ENCODE measurements at regions of chr5 and their contacts with region 1.

Region 1: GRCh38 chr5:35777358-35778087 is 79.2 kb upstream of the IL7R start:
- DNase-seq: peak; percentile 35 to 76 (median 67)
- ATAC-seq: peak; percentile 83
- H3K4me3 ChIP-seq: peak overlapping the region; percentile 14
- H3K4me3 Mint-ChIP-seq: peak overlapping the region; percentile 6 to 85 (median 74)
- H3K27ac ChIP-seq: peak overlapping the region; percentile 52
- H3K27ac Mint-ChIP-seq: peak overlapping the region; percentile 76 to 99 (median 92)
- H3K4me1 ChIP-seq: peaks cover 39 to 50% of the 10 kb centered on the region in 2 donors
- H3K4me1 Mint-ChIP-seq: peaks cover 19 to 87% (median 62%) of the 10 kb centered on the region in 7 donors
- H3K27me3 ChIP-seq: no peaks in the 10 kb centered on the region
- H3K27me3 Mint-ChIP-seq: no peaks in the 10 kb centered on the region

Region 2: GRCh38 chr5:35089334-35090314 is 687.9 kb before region 1 on chr5:
- CTCF ChIA-PET with region 1: no interaction called
- POLR2A ChIA-PET with region 1: no interaction called
- intact Hi-C with region 1: loop called in 1 of 2 experiments (anchors 5 kb)
- DNase-seq: peak; percentile 15 to 55 (median 37)
- ATAC-seq: peak; percentile 56
- H3K4me3 ChIP-seq: no peak overlapping the region
- H3K4me3 Mint-ChIP-seq: no peak overlapping the region
- H3K27ac ChIP-seq: no peak overlapping the region
- H3K27ac Mint-ChIP-seq: no peak overlapping the region
- H3K4me1 ChIP-seq: no peaks in the 10 kb centered on the region
- H3K4me1 Mint-ChIP-seq: peaks cover 0 to 3% (median 0%) of the 10 kb centered on the region in 7 donors
- H3K27me3 ChIP-seq: no peaks in the 10 kb centered on the region
- H3K27me3 Mint-ChIP-seq: peaks cover 0 to 7% (median 6%) of the 10 kb centered on the region in 5 donors

Region 3: GRCh38 chr5:35543408-35543807 is 234.1 kb before region 1 on chr5:
- CTCF ChIA-PET with region 1: no interaction called
- POLR2A ChIA-PET with region 1: no interaction called
- intact Hi-C with region 1: no loop called
- DNase-seq: no peak
- ATAC-seq: no peak
- H3K4me3 ChIP-seq: no peak overlapping the region
- H3K4me3 Mint-ChIP-seq: no peak overlapping the region
- H3K27ac ChIP-seq: no peak overlapping the region
- H3K27ac Mint-ChIP-seq: no peak overlapping the region
- H3K4me1 ChIP-seq: no peaks in the 10 kb centered on the region
- H3K4me1 Mint-ChIP-seq: peaks cover 0 to 8% (median 5%) of the 10 kb centered on the region in 7 donors
- H3K27me3 ChIP-seq: no peaks in the 10 kb centered on the region
- H3K27me3 Mint-ChIP-seq: peaks cover 8 to 39% (median 22%) of the 10 kb centered on the region in 5 donors

Region 4: DNA sequence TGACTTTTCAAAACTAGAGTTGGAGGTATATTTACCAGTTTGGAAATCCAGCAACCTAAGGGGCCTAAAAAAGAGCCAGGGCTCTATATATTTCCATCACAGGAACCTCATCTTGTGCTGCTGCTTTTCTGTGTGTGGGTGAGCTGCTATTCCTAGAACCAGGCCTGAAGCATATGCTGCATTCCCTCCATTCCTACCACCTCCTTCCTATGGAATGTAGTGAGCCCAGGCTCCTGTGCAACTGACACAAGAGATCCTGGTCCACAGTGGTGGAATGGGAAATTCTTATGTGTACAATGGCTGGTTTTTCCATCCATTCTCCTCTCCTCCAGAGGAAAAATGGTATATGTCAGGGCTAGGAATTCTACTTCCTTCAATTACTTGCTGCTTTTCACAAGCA is 120.8 kb before region 1 on chr5:
- CTCF ChIA-PET with region 1: interaction called, 25 read pairs
- POLR2A ChIA-PET with region 1: interaction called, 10 read pairs
- intact Hi-C with region 1: loop called (anchors 1 to 2 kb)
- DNase-seq: no peak
- ATAC-seq: no peak
- H3K4me3 ChIP-seq: no peak overlapping the region
- H3K4me3 Mint-ChIP-seq: no peak overlapping the region
- H3K27ac ChIP-seq: no peak overlapping the region
- H3K27ac Mint-ChIP-seq: peak overlapping the region in 2 of 9 donors; percentile 16 to 45
- H3K4me1 ChIP-seq: peaks cover 0 to 5% of the 10 kb centered on the region in 2 donors
- H3K4me1 Mint-ChIP-seq: peaks cover 7 to 34% (median 19%) of the 10 kb centered on the region in 7 donors
- H3K27me3 ChIP-seq: no peaks in the 10 kb centered on the region
- H3K27me3 Mint-ChIP-seq: no peaks in the 10 kb centered on the region

Region 5: DNA sequence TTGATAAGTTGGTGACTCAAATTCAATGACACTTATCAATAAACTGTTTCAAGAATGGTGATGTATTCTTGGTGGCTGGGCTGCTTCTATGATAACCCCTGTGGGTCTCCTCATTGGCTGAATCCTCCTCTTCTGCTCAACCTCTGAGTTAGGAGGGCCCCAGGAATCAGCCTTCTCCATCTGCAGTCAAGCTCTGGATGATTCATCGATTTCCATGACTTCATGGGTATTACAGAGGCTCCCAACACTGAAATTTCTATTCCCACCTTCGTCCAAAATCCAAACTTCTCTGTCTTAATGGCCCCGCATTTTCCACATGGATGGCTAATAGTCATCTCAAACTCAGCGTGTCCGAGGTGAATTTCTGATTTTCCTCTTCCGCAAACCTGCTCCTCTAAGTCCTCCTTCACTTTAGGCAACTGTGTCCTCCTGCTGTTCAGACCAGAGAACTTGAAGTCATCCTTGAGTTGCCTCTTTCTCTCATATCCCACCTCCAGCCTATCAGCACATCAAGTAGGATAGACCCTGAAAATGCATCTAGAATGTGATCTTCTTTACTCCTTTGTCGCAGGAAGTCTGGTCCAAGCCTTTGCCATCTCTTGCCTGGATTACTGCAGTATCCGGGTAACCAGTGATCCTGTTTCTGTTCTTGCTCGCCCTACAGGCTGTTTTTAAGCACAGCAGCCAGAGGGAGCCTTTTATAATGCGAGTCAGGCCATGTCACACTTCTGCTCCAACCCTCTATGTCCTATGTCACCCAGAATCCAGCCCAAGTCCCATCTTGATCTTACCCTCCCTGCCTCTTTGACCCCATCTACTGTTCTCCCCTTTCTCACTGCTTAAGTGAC is 37.8 kb after region 1 on chr5:
- CTCF ChIA-PET with region 1: interaction called, 50 read pairs
- POLR2A ChIA-PET with region 1: interaction called, 238 read pairs
- intact Hi-C with region 1: loop called (anchors 1 kb)
- DNase-seq: peak in 2 of 9 donors; percentile 41 to 45
- ATAC-seq: no peak
- H3K4me3 ChIP-seq: peak overlapping the region; percentile 25
- H3K4me3 Mint-ChIP-seq: no peak overlapping the region
- H3K27ac ChIP-seq: peak overlapping the region; percentile 23
- H3K27ac Mint-ChIP-seq: no peak overlapping the region
- H3K4me1 ChIP-seq: peaks cover 67 to 88% of the 10 kb centered on the region in 2 donors
- H3K4me1 Mint-ChIP-seq: peaks cover 25 to 56% (median 43%) of the 10 kb centered on the region in 7 donors
- H3K27me3 ChIP-seq: no peaks in the 10 kb centered on the region
- H3K27me3 Mint-ChIP-seq: no peaks in the 10 kb centered on the region

Region 6: DNA sequence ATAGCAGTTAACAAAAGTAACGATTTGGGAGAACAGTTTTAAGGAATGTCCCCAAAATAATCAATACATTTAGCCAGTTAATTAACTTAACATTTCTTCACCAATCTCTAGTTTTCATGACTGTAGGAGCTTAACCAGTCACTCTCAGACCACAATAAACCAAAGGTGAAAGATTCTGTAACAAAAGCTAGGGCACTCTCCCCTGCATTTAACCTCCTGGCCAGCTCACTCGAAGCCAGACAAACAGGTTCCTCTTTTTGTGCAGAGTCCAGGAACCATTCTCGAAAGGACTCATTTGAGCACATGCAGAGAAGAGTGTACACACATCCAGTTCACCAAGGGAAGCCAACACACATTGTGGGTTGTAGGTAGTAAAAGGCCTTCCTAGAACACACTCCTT is 85.6 kb after region 1 on chr5:
- CTCF ChIA-PET with region 1: interaction called, 128 read pairs
- POLR2A ChIA-PET with region 1: interaction called, 979 read pairs
- intact Hi-C with region 1: no loop called
- DNase-seq: no peak
- ATAC-seq: no peak
- H3K4me3 ChIP-seq: peak overlapping the region; percentile 80
- H3K4me3 Mint-ChIP-seq: peak overlapping the region; percentile 87 to 99 (median 94)
- H3K27ac ChIP-seq: peak overlapping the region; percentile 98
- H3K27ac Mint-ChIP-seq: peak overlapping the region; percentile 47 to 99 (median 95)
- H3K4me1 ChIP-seq: peaks cover 34 to 45% of the 10 kb centered on the region in 2 donors
- H3K4me1 Mint-ChIP-seq: peaks cover 20 to 81% (median 76%) of the 10 kb centered on the region in 7 donors
- H3K27me3 ChIP-seq: no peaks in the 10 kb centered on the region
- H3K27me3 Mint-ChIP-seq: no peaks in the 10 kb centered on the region

Region 7: DNA sequence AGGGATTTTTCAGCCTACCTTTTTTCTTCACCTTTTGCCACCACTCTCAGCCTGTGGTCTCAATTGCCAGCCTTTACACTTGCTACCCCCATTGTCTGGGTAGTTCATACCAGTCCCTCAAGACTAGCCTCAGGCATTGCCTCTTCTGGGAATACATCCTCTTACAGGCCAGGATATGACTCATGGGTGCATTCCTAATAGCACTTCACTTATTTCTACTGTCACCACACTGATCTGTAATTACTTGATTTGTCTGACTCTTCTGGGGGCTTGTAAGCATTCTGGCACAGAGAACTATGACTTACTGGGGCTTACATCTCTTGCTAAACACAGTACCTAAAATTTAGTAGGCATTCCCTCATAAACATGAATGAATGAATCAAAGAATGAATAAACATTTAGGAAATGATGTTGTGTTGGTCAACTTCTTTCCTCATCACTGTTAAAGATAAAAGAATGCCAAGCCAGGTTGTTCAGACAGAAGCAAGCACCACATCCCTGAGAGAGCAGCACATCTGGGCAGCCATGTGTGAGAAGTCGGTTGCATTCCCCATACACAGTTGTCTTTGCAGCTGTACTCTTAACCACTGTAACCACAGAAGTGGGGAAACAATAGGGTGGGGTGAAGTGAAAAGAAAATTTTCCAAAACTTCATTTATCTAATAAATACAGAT is 106.7 kb after region 1 on chr5:
- CTCF ChIA-PET with region 1: interaction called, 8 read pairs
- POLR2A ChIA-PET with region 1: interaction called, 59 read pairs
- intact Hi-C with region 1: no loop called
- DNase-seq: no peak
- ATAC-seq: peak; percentile 57
- H3K4me3 ChIP-seq: no peak overlapping the region
- H3K4me3 Mint-ChIP-seq: peak overlapping the region in 8 of 10 donors; percentile 2 to 62 (median 18)
- H3K27ac ChIP-seq: no peak overlapping the region
- H3K27ac Mint-ChIP-seq: peak overlapping the region in 8 of 9 donors; percentile 5 to 90 (median 68)
- H3K4me1 ChIP-seq: peaks cover 10 to 25% of the 10 kb centered on the region in 2 donors
- H3K4me1 Mint-ChIP-seq: peaks cover 37 to 56% (median 51%) of the 10 kb centered on the region in 7 donors
- H3K27me3 ChIP-seq: no peaks in the 10 kb centered on the region
- H3K27me3 Mint-ChIP-seq: no peaks in the 10 kb centered on the region